Mammary epithelial cell (primary cell): ENCODE measurements at regions of chr19 and their contacts with region 1.

Region 1: GRCh38 chr19:14571695-14572490 is at the start of gene NDUFB7:
- DNase-seq: peak; percentile 94
- H3K4me3 ChIP-seq: peak within 1 kb of the TSS; percentile 67 to 100 (median 99)
- H3K27ac ChIP-seq: peak within 1 kb of the TSS; percentile 70
- H3K4me1 ChIP-seq: peaks cover 14% of the 10 kb centered on the region
- H3K27me3 ChIP-seq: no peaks in the 10 kb centered on the region
- CTCF ChIP-seq: peak; percentile 68 to 85
- total RNA-seq, gene NDUFB7: 142 to 177 TPM

Region 2: GRCh38 chr19:14890643-14891379 is 318.9 kb after region 1 on chr19:
- CTCF ChIA-PET with region 1: no interaction called
- dilution Hi-C with region 1: no loop called
- in situ Hi-C with region 1: no loop called
- intact Hi-C with region 1: loop called (anchors 1 kb)
- DNase-seq: no peak
- H3K4me3 ChIP-seq: no peak overlapping the region
- H3K27ac ChIP-seq: no peak overlapping the region
- H3K4me1 ChIP-seq: no peaks in the 10 kb centered on the region
- H3K27me3 ChIP-seq: no peaks in the 10 kb centered on the region
- CTCF ChIP-seq: no peak